ENCODE measurements at regions of chr7 and their contacts with region 1.

Region 1: DNA sequence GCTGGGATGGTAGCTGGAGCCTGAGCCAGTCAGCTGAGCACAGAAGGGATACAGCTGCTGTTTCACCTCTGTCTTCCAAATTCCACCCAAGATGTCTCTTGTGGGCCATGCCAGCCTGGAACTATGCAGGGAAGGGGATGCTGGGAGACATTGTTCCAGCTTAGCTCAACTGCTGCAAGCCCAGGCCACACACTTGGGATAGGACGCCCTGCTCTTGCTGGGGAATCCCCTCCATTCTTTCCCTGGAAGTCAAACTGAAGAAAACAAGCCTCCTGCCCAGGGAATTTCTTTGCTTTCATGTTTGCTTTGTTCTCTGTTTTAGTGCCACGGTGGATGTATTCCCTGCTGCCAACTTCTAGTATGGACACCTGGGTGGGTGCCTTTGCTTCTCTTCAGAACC is 55.2 kb upstream of the CDK13 start:
- DNase-seq: no peak
- ATAC-seq: no peak

Region 2: GRCh38 chr7:39838326-39838725 is 56.6 kb before region 1 on chr7:
- intact Hi-C with region 1: no loop called
- DNase-seq: peak; percentile 20
- ATAC-seq: no peak

Region 3: GRCh38 chr7:39948956-39949928 is 54.3 kb after region 1 on chr7:
- intact Hi-C with region 1: loop called in 1 of 2 experiments (anchors 5 kb)
- DNase-seq: peak; percentile 99
- ATAC-seq: peak; percentile 89 to 94

Region 4: GRCh38 chr7:40057292-40057691 is 162.4 kb after region 1 on chr7:
- intact Hi-C with region 1: loop called (anchors 1 to 5 kb)
- DNase-seq: peak; percentile 46
- ATAC-seq: peak; percentile 52 to 86

Region 5: DNA sequence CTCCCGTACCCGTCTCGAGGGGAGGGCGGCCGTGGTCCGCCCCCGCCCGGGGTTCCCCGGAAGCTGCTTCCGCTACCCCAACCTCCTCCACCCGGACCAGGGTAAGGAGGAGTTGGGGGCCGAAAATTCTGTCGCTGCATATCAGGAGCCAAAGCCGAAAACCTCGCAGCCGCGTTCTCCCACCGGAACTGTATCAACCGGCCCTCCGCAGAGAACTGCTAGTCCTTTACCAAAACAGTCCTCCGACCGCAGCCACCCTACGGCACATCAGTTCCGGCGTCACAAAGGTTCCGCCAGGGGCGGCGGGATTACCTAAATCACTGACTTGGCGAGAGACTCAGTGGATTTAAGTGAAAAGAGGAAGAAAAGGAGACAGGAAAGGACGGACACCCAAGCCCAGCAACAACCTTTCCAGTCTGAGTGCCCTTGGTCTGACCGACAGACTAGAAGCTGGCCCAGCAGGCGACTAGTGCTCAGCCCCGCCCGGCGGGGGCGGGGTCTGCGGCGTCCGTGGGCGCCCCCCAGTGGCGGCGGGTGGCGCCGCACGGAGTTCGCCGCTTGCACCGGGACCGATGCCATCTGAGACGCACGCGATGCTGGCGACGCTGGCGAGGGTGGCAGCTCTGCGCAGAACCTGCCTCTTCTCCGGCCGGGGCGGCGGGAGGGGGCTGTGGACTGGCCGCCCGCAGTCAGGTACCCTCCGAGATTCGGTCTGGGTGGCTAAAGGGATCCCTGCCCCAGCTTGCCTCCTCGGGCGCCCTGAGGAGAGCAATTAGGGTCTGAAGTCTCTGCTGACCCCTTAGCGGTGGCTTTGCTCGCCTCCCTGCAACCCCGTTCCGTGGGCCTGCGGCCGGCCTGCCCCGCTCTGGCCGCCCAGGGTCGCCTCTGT is 239.8 kb after region 1 on chr7 and contains the starts of genes MPLKIP and SUGCT:
- intact Hi-C with region 1: loop called in 1 of 2 experiments (anchors 5 kb)
- DNase-seq: peak; percentile 87
- ATAC-seq: peak; percentile 96 to 97
- total RNA-seq, gene MPLKIP: 17.1 to 20.5 TPM
- total RNA-seq, gene SUGCT: 4.1 to 4.4 TPM

Measured in left cardiac atrium (tissue), 4 donors.